ENCODE measurements at regions of chr20 and their contacts with region 1.

Region 1: DNA sequence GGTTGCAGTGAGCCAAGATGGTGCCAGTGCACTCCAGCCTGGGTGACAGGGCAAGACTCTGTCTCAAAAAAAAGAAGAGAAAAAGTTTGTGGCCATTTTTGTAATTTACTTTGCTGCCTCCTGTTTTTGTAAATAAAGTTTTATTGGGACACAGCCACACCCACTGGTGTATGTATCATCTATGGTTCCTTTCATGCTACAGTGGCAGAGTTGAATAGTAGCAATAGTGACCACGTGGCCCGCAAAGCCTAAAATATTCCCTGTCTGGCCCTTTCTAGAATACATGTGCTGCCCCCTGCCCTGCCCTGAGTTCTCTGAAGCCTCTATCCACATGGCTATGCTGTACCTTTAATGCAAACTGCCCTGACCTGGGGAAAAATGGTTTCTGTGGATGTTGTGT is 75.3 kb upstream of the ZNF133 start:
- DNase-seq: no peak
- ATAC-seq: no peak
- H3K4me3 ChIP-seq: no peak overlapping the region
- H3K27ac ChIP-seq: no peak overlapping the region
- H3K4me1 ChIP-seq: no peaks in the 10 kb centered on the region
- H3K27me3 ChIP-seq: no peaks in the 10 kb centered on the region
- CTCF ChIP-seq: no peak

Region 2: GRCh38 chr20:18224968-18225568 is 12.1 kb after region 1 on chr20:
- intact Hi-C with region 1: loop called in 1 of 10 experiments (anchors 2 kb)
- DNase-seq: peak; percentile 20 to 24
- ATAC-seq: peak in 7 of 8 donors; percentile 33 to 82 (median 53)
- H3K4me3 ChIP-seq: no peak overlapping the region
- H3K27ac ChIP-seq: no peak overlapping the region
- H3K4me1 ChIP-seq: peaks cover 0 to 20% (median 11%) of the 10 kb centered on the region in 9 donors
- H3K27me3 ChIP-seq: peaks cover 0 to 7% (median 0%) of the 10 kb centered on the region in 7 donors
- CTCF ChIP-seq: no peak